GM10248 (cell line): ENCODE measurements at regions of chr6 and their contacts with region 1.

Region 1: DNA sequence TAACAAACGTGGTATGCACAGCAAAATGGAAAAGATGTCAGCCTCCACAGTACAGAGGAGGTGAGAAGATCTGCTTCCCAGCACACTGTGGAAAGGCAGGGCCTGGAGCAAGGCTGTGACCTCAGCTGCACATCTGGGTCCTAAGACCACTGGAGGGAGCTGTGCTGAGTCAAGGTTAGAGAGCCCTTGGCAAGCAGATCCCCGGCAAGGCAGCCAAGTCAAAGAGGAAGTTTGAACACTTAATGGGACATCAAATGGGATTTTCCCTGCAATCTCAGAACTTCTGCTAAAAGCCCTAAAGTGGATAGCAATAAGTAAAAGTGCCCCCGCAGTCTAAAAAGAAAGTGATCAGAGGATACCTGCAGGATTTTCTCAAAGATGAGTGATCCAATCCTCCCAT is 39.5 kb downstream of the UNC5CL start:
- DNase-seq: peak; percentile 59
- CTCF ChIP-seq: peak; percentile 25

Region 2: DNA sequence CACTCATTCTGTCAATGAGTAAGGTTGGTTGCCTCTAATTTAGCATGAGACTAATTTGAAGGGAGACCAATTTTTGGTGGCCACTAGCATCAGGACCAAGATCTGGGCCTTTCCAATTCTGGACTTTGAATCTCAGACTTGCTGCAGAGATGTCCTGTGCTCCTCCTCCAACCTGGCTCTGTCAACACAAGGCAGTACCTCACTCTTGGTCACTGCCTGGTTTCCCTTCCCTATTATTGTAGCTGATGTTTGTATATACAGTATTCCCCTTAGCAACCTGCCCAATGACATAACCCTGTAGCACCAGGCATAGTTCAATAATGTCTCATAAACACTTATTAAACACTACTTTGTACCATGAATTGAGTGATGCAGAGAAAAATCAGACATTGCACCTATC is 10.9 kb before region 1 on chr6:
- CTCF ChIA-PET with region 1: interaction called, 11 read pairs
- POLR2A ChIA-PET with region 1: no interaction called
- DNase-seq: no peak
- CTCF ChIP-seq: no peak